HEK293 (cell line): ENCODE measurements at regions of chr14 and their contacts with region 1.

Region 1: DNA sequence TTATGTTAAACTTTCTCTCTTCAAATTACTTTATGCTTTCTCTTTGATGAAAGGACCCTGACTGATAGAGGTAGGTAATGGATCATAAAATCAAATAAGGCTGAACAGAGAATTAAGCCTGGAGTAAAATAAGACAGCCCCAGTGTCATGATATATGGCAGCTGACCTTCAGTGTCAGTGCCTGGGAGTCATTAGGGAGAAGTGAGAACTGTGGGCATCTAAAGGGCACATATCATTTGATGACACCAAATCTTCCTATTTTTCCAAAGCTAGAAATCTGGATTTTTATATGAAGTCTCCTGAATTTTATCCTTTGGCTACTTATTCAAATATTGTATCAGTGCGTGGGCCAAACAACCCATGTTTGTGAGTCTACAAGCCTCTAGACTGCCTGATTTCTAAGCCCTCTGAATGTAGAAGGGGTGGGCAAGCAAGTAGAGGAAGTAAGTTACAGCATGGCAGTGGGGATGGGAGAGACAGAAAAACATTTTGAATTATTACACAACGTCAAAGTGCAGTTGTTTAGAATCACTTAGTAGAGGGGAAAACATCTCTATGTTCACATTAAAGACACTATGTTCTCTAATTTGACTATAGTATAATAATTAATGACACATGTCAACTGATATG is 10.0 kb downstream of the SLC39A9 start:
- H3K4me3 ChIP-seq: no peak overlapping the region
- H3K27ac ChIP-seq: no peak overlapping the region
- H3K4me1 ChIP-seq: 0 out of 2 replicates have a peak, but pooled peaks cover 5% of the 10 kb centered on the region
- CTCF ChIP-seq: no peak

Region 2: GRCh38 chr14:69183735-69184134 is 224.7 kb before region 1 on chr14:
- CTCF ChIA-PET with region 1: interaction called, 10 read pairs
- POLR2A ChIA-PET with region 1: no interaction called
- H3K4me3 ChIP-seq: no peak overlapping the region
- H3K27ac ChIP-seq: no peak overlapping the region
- H3K4me1 ChIP-seq: no peaks in the 10 kb centered on the region
- CTCF ChIP-seq: no peak

Region 3: GRCh38 chr14:69428289-69428998 is 20.0 kb after region 1 on chr14:
- CTCF ChIA-PET with region 1: no interaction called
- POLR2A ChIA-PET with region 1: no interaction called
- H3K4me3 ChIP-seq: no peak overlapping the region
- H3K27ac ChIP-seq: no peak overlapping the region
- H3K4me1 ChIP-seq: no peaks in the 10 kb centered on the region
- CTCF ChIP-seq: no peak